MCF 10A (cell line): ENCODE measurements at regions of chr9 and their contacts with region 1.

Region 1: DNA sequence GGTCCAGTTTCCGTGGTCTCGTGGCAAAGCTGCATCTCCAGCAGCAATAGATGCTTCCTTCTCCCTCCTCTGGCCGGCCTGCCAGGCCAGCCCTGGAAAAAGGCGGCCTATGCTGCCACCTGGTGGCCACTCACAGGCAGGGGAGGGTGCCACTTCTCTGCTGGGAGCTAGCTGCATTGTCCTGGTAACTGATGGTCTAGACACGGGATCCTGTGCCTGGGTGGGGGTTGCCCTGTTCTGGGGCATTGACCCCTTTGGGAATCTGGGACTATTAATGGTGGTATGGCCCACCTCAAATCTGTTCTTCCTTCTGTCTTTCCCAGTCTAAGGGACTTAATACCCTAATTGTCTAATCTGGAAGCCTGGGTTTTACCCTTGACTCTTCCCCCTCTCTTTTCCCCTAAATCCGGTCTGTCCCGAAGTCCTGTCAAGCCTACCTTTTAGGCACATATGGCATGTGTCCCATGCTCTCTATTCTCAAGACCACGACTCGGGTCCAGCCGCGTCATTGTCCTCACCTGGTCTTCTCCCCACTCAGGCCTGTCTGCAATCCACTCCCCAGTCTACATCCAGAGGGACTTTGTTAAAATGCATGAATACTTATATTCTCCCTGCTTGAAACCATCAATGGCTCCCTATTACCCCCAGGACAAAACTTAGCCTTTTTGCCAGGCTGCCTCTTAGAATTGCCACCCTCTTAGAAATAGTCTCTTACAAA is 20.0 kb upstream of the PTGS1 start:
- DNase-seq: peak; percentile 77
- H3K4me3 Mint-ChIP-seq: no peak overlapping the region
- H3K27ac Mint-ChIP-seq: no peak overlapping the region
- H3K4me1 Mint-ChIP-seq: no peaks in the 10 kb centered on the region
- H3K27me3 Mint-ChIP-seq: no peaks in the 10 kb centered on the region
- CTCF ChIP-seq: peak; percentile 89

Region 2: DNA sequence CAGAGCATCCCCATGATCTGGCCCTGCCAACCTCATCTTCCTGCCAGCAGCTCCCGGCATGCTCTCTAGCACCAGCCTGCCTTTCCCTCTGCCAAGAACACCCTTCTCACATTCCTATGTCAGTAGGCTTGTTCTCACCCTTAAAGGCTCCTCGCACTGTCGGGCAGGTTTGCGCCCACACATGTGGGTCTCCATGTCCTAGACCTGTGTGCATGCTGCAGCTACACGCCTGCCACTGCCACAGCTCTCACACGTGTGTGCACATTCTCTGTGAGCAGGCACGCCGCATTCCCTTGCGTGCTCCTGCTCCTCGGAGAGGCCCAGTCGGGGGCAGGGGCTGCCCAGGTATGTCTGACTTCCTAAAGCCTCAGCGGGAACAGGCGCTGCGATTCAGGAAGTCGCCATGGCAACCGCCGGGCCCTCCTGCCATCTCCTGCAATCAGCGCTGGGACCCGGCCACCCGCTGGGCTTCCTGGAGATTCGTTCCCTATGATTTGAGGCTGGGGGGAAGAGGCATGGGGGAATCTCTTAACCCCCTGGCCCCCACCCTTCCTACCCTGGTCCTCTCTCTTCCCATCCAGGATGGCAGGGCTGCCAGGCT is 219.3 kb before region 1 on chr9:
- CTCF ChIA-PET with region 1: interaction called, 473 read pairs
- POLR2A ChIA-PET with region 1: no interaction called
- intact Hi-C with region 1: no loop called
- DNase-seq: no peak
- H3K4me3 Mint-ChIP-seq: no peak overlapping the region
- H3K27ac Mint-ChIP-seq: no peak overlapping the region
- H3K4me1 Mint-ChIP-seq: peaks cover 2% of the 10 kb centered on the region
- H3K27me3 Mint-ChIP-seq: no peaks in the 10 kb centered on the region
- CTCF ChIP-seq: no peak

Region 3: GRCh38 chr9:122338994-122339393 is 11.8 kb before region 1 on chr9:
- CTCF ChIA-PET with region 1: interaction called, 25 read pairs
- POLR2A ChIA-PET with region 1: interaction called, 4 read pairs
- intact Hi-C with region 1: no loop called
- DNase-seq: no peak
- H3K4me3 Mint-ChIP-seq: no peak overlapping the region
- H3K27ac Mint-ChIP-seq: no peak overlapping the region
- H3K4me1 Mint-ChIP-seq: peaks cover 7% of the 10 kb centered on the region
- H3K27me3 Mint-ChIP-seq: peaks cover 20% of the 10 kb centered on the region
- CTCF ChIP-seq: no peak

Region 4: DNA sequence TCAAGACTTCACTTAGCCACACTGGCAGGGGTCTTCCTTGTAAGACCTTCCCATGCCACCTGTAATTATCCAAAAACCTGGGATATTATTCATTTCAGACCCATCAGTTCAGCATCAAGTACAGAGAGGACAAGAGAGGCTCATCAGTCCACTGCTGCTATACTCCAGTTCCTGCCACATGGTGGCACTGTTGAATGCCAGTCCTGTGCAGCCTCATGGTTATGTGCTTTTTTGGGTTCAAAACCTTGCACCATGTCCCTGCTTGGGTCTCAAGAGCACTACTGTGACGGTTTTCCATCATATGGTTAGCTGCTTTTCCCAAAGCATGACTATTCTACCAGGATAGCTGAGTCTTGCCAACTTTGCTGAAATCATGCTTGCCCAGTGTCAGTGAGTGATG is 28.5 kb after region 1 on chr9:
- CTCF ChIA-PET with region 1: interaction called, 11 read pairs
- POLR2A ChIA-PET with region 1: no interaction called
- intact Hi-C with region 1: no loop called
- DNase-seq: peak; percentile 35
- H3K4me3 Mint-ChIP-seq: no peak overlapping the region
- H3K27ac Mint-ChIP-seq: no peak overlapping the region
- H3K4me1 Mint-ChIP-seq: peaks cover 30% of the 10 kb centered on the region
- H3K27me3 Mint-ChIP-seq: no peaks in the 10 kb centered on the region
- CTCF ChIP-seq: peak; percentile 33

Region 5: GRCh38 chr9:122402403-122402871 is 51.6 kb after region 1 on chr9:
- CTCF ChIA-PET with region 1: no interaction called
- POLR2A ChIA-PET with region 1: no interaction called
- intact Hi-C with region 1: no loop called
- DNase-seq: peak; percentile 88
- H3K4me3 Mint-ChIP-seq: no peak overlapping the region
- H3K27ac Mint-ChIP-seq: no peak overlapping the region
- H3K4me1 Mint-ChIP-seq: peaks cover 10% of the 10 kb centered on the region
- H3K27me3 Mint-ChIP-seq: no peaks in the 10 kb centered on the region
- CTCF ChIP-seq: no peak

Region 6: GRCh38 chr9:122453677-122454135 is 102.9 kb after region 1 on chr9:
- CTCF ChIA-PET with region 1: interaction called, 10 read pairs
- POLR2A ChIA-PET with region 1: no interaction called
- intact Hi-C with region 1: loop called (anchors 1 kb)
- DNase-seq: no peak
- H3K4me3 Mint-ChIP-seq: no peak overlapping the region
- H3K27ac Mint-ChIP-seq: peak overlapping the region; percentile 19
- H3K4me1 Mint-ChIP-seq: no peaks in the 10 kb centered on the region
- H3K27me3 Mint-ChIP-seq: peaks cover 43% of the 10 kb centered on the region
- CTCF ChIP-seq: no peak